ENCODE measurements at regions of chr7 and their contacts with region 1.

Region 1: DNA sequence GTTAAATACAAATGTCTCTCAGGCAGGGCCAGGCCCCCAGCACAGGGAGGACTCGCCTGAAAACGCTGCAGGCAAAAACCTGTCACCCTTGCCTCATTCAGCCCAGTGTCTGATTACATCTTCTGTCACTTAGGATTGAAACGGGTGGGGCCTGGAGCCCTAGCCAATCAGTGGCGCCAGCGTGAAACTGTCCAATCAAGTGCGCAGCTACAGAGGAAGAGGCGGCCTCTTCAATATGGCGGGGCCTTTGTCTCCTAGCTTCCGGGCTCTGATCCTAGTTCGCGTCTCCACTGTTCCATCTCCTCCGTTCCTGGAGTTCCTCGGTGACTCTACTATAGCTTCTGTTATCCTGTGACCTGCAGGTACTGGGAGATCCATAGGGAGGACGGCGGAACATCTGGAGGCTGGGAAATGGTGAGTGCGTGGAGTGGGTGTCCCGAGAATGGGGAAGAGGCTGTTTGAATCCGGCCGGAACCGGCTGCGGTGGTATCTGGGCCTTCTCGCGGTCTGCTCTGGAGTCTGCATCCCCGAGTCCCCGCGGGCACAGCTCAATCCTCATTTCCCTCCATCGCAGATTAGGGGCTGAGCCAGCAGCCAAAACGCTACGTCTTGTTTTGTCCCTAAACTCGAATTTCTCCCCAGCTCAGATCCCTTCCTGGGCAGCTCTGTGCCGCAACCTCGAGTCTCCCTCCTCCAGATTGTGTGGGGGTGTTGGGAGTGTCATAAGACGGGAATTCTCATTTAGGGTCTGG is at the start of gene ZNF736:
- DNase-seq: peak; percentile 71 to 94 (median 86)
- ATAC-seq: peak; percentile 100
- H3K4me3 ChIP-seq: peak within 1 kb of the TSS; percentile 66 to 98
- H3K4me3 Mint-ChIP-seq: peak within 1 kb of the TSS; percentile 99
- H3K27ac ChIP-seq: peak within 1 kb of the TSS; percentile 76 to 88
- H3K27ac Mint-ChIP-seq: peak within 1 kb of the TSS; percentile 98
- H3K4me1 ChIP-seq: peaks cover 25% of the 10 kb centered on the region
- H3K4me1 Mint-ChIP-seq: peaks cover 32% of the 10 kb centered on the region
- H3K27me3 ChIP-seq: no peaks in the 10 kb centered on the region
- H3K27me3 Mint-ChIP-seq: no peaks in the 10 kb centered on the region
- CTCF ChIP-seq: no peak
- total RNA-seq, gene ZNF736: 23.4 to 26.6 TPM

Region 2: DNA sequence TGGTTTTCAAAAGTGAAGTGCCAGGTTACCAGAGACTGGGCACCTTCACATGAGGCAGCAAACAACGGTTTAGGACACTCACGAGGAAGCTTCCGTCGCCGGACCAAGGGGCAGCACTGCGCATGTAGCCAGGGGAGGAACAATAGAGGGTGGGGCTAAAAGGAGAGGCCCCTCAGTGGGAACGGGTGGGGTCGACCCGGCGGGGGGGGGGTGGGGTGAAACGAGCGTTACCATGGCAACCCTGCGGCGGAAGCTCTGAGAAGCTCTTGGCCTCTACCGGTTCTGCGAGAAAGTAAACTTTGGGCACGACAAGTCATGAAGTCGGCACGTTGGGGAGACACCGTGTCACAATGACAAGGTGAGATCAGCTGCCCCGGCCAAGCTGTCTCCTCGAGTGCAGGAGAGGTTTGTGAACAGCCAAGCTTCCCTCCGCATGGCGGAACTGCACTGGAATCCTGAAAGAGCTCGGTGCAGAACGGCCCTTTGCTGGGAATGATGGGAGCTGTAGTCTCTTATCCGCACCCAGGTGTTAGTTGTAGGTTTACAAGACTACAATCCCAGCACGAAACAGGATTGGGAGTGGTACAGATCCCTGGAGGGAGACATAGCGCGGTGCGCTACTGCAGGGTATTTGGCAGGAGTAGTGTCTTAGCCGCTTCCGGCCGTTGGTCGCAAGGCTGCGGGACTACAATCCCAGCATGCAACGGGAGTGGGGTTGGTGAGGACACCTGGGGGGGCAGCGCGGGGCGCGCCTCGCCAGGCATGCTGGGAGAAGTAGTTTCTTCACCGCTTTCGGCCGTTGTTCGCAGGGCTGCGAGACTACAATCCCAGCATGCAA is 388.1 kb before region 1 on chr7:
- CTCF ChIA-PET with region 1: no interaction called
- POLR2A ChIA-PET with region 1: no interaction called
- intact Hi-C with region 1: loop called (anchors 2 to 5 kb)
- DNase-seq: peak; percentile 80 to 95 (median 90)
- ATAC-seq: peak; percentile 95
- H3K4me3 ChIP-seq: peak overlapping the region; percentile 76 to 93
- H3K4me3 Mint-ChIP-seq: peak overlapping the region; percentile 94
- H3K27ac ChIP-seq: peak overlapping the region; percentile 84 to 88
- H3K27ac Mint-ChIP-seq: peak overlapping the region; percentile 92
- H3K4me1 ChIP-seq: no peaks in the 10 kb centered on the region
- H3K4me1 Mint-ChIP-seq: peaks cover 13% of the 10 kb centered on the region
- H3K27me3 ChIP-seq: no peaks in the 10 kb centered on the region
- H3K27me3 Mint-ChIP-seq: no peaks in the 10 kb centered on the region
- CTCF ChIP-seq: no peak

Region 3: DNA sequence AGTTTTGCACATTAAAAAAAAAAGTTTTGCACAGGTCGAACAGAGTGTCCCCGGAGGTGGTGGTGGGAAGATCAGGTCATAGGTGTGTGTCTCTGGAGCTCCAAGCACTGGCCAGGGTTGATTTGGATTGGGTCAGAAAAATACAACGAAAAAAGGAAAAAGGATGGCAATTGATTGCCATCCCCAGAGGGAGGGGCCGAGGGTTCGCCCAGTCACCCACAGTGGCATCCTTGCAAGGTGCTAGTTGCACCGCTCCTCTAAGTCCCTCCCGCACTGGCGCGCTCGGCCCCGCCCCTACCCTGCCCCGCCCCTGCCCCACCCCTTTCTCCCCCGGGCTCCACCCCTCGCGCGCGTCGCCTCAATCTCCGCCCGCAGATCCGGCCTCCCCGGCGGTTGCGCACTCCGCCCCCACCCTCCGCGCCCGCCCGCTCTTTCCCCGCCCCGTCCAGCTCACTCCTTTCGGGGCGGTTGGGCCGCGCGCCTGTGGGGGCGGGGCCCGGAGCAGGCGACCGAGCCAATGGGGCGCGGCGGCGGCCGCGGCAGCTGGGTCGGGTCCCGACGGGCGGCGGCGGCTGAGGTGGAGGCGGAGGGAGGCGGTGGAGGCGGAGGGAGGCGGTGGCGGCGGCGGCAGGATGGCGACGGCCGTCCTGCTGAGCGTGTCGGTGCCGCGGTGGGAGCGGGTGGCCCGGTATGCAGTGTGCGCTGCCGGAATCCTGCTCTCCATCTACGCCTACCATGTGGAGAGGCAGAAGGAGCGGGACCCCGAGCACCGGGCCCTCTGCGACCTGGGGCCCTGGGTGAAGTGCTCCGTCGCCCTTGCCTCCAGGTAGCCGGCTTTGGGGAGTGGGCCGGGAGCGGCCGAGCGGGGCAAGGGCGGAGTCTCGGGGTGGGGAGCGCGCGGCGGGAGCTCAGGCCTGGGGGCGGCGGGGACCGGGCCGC is 724.1 kb after region 1 on chr7:
- CTCF ChIA-PET with region 1: no interaction called
- POLR2A ChIA-PET with region 1: interaction called, 3 read pairs
- intact Hi-C with region 1: loop called in 1 of 2 experiments (anchors 10 kb)
- DNase-seq: peak; percentile 87 to 97 (median 94)
- ATAC-seq: peak; percentile 89
- H3K4me3 ChIP-seq: peak overlapping the region; percentile 52 to 69
- H3K4me3 Mint-ChIP-seq: peak overlapping the region; percentile 79
- H3K27ac ChIP-seq: peak overlapping the region; percentile 62 to 74
- H3K27ac Mint-ChIP-seq: peak overlapping the region; percentile 80
- H3K4me1 ChIP-seq: peaks cover 11% of the 10 kb centered on the region
- H3K4me1 Mint-ChIP-seq: peaks cover 14% of the 10 kb centered on the region
- H3K27me3 ChIP-seq: no peaks in the 10 kb centered on the region
- H3K27me3 Mint-ChIP-seq: no peaks in the 10 kb centered on the region
- CTCF ChIP-seq: peak; percentile 16

Measured in CD8-positive, alpha-beta T cell (primary cell).